Caco-2 (cell line): ENCODE measurements at regions of chr2 and their contacts with region 1.

Region 1: GRCh38 chr2:38535744-38536506 is 66.8 kb downstream of the HNRNPLL start:
- DNase-seq: peak; percentile 79 to 91
- H3K4me3 ChIP-seq: peak overlapping the region; percentile 38
- H3K4me3 Mint-ChIP-seq: peak overlapping the region; percentile 53
- H3K27ac Mint-ChIP-seq: no peak overlapping the region
- H3K4me1 ChIP-seq: peaks cover 5% of the 10 kb centered on the region; the same call in 1 of the 2 replicates
- H3K4me1 Mint-ChIP-seq: peaks cover 6% of the 10 kb centered on the region
- H3K27me3 ChIP-seq: no peaks in the 10 kb centered on the region
- H3K27me3 Mint-ChIP-seq: no peaks in the 10 kb centered on the region
- CTCF ChIP-seq: peak; percentile 90 to 92

Region 2: DNA sequence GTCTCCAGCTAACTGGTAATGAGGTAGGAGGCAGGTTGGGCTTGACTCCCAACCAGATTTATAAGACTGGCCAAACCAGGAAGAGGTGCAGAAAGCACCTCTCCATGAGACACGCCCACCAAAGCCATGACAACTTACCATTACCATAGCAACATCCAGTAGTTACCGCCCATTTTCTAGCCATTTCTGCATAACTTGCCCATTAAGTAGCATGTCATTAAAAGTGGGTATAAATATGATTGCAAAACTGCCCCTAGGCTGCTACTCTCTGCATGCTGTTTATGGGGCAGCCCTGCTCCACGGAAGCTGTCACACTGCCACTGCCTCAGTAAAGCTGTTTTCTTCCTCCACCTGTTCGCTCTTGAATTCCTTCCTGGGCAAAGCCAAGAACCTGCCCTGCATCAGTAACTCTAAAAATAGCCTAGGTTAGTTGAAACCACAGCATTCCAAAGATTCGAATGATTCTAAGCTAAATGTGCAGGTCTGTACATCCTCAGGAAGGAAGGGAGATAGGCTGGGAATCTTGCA is 290.7 kb before region 1 on chr2:
- CTCF ChIA-PET with region 1: no interaction called
- POLR2A ChIA-PET with region 1: no interaction called
- intact Hi-C with region 1: no loop called
- DNase-seq: no peak
- H3K4me3 ChIP-seq: no peak overlapping the region
- H3K4me3 Mint-ChIP-seq: no peak overlapping the region
- H3K27ac Mint-ChIP-seq: no peak overlapping the region
- H3K4me1 ChIP-seq: no peaks in the 10 kb centered on the region
- H3K4me1 Mint-ChIP-seq: no peaks in the 10 kb centered on the region
- H3K27me3 ChIP-seq: no peaks in the 10 kb centered on the region
- H3K27me3 Mint-ChIP-seq: no peaks in the 10 kb centered on the region
- CTCF ChIP-seq: no peak

Region 3: DNA sequence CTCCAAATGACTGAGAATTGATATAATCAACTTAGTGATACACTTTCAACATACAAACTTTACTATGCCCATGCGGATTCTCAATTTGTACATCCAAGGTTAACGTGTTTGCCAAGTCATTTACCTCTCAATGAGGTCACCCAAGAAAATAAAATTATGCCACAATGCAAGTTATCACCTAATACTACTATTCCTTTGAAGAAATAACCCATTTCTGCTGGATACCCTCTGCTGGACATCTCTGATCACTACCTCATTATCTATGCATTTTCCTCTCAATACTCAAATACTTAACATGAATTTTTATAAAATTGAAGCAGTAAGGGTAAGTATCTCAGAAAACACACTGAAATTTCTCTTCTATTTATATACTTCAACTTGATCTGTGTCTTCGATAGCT is 54.1 kb after region 1 on chr2:
- CTCF ChIA-PET with region 1: no interaction called
- POLR2A ChIA-PET with region 1: no interaction called
- intact Hi-C with region 1: no loop called
- DNase-seq: no peak
- H3K4me3 ChIP-seq: no peak overlapping the region
- H3K4me3 Mint-ChIP-seq: no peak overlapping the region
- H3K27ac Mint-ChIP-seq: no peak overlapping the region
- H3K4me1 ChIP-seq: peaks cover 7% of the 10 kb centered on the region; the same call in 1 of the 2 replicates
- H3K4me1 Mint-ChIP-seq: peaks cover 17% of the 10 kb centered on the region
- H3K27me3 ChIP-seq: no peaks in the 10 kb centered on the region
- H3K27me3 Mint-ChIP-seq: no peaks in the 10 kb centered on the region
- CTCF ChIP-seq: peak; percentile 21 to 41

Region 4: DNA sequence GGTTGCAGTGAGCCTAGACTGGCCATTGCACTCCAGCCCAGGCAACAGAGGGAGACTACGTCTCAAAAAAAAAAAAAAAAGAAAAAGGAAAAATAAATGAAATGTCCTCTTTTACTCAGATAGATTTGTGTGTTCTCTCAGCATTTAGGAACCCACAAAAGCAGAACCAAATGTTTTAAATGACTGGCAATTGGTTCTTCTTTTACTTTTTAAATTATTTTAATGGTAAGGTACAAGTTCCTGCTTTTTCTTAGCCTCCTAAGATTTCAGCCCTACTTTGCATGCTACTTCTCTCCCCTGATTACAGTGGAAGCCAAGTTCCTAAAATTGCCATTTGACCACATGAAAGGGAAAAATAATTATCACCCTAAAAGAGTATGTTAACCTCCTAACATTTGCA is 191.7 kb after region 1 on chr2:
- CTCF ChIA-PET with region 1: no interaction called
- POLR2A ChIA-PET with region 1: no interaction called
- intact Hi-C with region 1: loop called (anchors 2 kb)
- DNase-seq: no peak
- H3K4me3 ChIP-seq: no peak overlapping the region
- H3K4me3 Mint-ChIP-seq: no peak overlapping the region
- H3K27ac Mint-ChIP-seq: no peak overlapping the region
- H3K4me1 ChIP-seq: no peaks in the 10 kb centered on the region
- H3K4me1 Mint-ChIP-seq: no peaks in the 10 kb centered on the region
- H3K27me3 ChIP-seq: no peaks in the 10 kb centered on the region
- H3K27me3 Mint-ChIP-seq: no peaks in the 10 kb centered on the region
- CTCF ChIP-seq: no peak

Region 5: GRCh38 chr2:38740851-38741731 is 205.2 kb after region 1 on chr2:
- CTCF ChIA-PET with region 1: no interaction called
- POLR2A ChIA-PET with region 1: no interaction called
- intact Hi-C with region 1: loop called (anchors 5 kb)
- DNase-seq: peak in 1 of 2 experiments; percentile 49
- H3K4me3 ChIP-seq: no peak overlapping the region
- H3K4me3 Mint-ChIP-seq: no peak overlapping the region
- H3K27ac Mint-ChIP-seq: no peak overlapping the region
- H3K4me1 ChIP-seq: peaks cover 5% of the 10 kb centered on the region
- H3K4me1 Mint-ChIP-seq: peaks cover 3% of the 10 kb centered on the region
- H3K27me3 ChIP-seq: no peaks in the 10 kb centered on the region
- H3K27me3 Mint-ChIP-seq: no peaks in the 10 kb centered on the region
- CTCF ChIP-seq: peak; percentile 33 to 56

Region 6: DNA sequence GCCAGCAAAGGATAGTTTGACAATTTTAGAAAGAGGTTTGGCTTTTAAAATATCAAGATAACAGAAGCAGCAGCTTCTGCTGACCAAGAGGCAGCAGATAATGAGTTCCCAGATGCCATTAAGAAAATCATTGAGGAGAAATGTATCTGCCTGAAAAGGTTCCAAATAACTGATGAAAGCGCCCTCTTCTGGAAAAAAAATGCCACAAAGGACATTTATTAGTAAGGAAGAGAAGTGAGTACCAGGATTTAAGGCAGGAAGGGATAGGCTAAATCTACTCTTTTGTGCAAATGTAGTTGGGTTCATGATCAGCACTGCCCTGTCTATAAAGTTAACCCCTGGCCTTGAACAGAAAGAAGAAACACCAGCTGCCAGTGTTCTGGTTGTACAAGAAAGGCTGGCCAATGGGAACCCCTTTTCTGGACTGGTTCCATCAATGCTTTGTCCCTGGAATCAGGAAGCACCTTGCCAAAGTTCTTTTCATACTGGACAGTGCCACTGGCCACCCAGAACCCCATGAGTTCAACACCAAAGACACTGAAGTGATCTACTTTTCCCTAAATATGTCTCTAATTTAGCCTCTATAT is 299.2 kb after region 1 on chr2:
- CTCF ChIA-PET with region 1: no interaction called
- POLR2A ChIA-PET with region 1: no interaction called
- intact Hi-C with region 1: loop called (anchors 10 kb)
- DNase-seq: peak in 1 of 2 experiments; percentile 40
- H3K4me3 ChIP-seq: no peak overlapping the region
- H3K4me3 Mint-ChIP-seq: no peak overlapping the region
- H3K27ac Mint-ChIP-seq: no peak overlapping the region
- H3K4me1 ChIP-seq: no peaks in the 10 kb centered on the region
- H3K4me1 Mint-ChIP-seq: no peaks in the 10 kb centered on the region
- H3K27me3 ChIP-seq: no peaks in the 10 kb centered on the region
- H3K27me3 Mint-ChIP-seq: no peaks in the 10 kb centered on the region
- CTCF ChIP-seq: peak; percentile 44 to 48